ENCODE measurements at regions of chr11 and their contacts with region 1.

Region 1: DNA sequence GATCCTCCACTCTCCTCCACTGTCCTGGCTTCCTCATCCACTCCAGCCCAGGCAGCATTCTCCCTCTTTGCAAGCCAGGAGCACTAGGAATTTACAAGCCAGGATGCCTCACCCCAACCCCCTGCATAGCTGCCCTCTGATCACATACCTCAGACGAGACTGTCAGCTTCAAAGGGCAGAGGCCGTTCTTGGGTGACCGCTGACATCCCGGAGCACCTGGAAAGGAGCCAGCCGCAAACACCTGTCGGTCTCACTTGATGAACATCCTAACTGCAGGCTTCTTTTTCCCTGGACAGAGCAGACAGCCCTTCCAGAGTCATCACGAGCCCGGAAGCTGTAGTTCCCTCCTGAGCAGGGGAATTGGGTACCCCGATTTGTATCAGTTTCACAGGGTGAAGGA is 451.3 kb upstream of the B3GAT1 start:
- DNase-seq: no peak
- H3K4me3 ChIP-seq: no peak overlapping the region
- H3K27ac ChIP-seq: no peak overlapping the region
- H3K4me1 ChIP-seq: no peaks in the 10 kb centered on the region
- H3K27me3 ChIP-seq: no peaks in the 10 kb centered on the region
- CTCF ChIP-seq: no peak

Region 2: GRCh38 chr11:135033540-135033939 is 170.2 kb after region 1 on chr11:
- CTCF ChIA-PET with region 1: no interaction called
- dilution Hi-C with region 1: no loop called
- in situ Hi-C with region 1: no loop called
- intact Hi-C with region 1: loop called (anchors 1 kb)
- DNase-seq: no peak
- H3K4me3 ChIP-seq: no peak overlapping the region
- H3K27ac ChIP-seq: no peak overlapping the region
- H3K4me1 ChIP-seq: no peaks in the 10 kb centered on the region
- H3K27me3 ChIP-seq: no peaks in the 10 kb centered on the region
- CTCF ChIP-seq: no peak